A673 (cell line): ENCODE measurements at regions of chr14 and their contacts with region 1.

Region 1: GRCh38 chr14:102437997-102438915 is 71.3 kb downstream of the ANKRD9 start:
- DNase-seq: peak; percentile 95
- H3K4me3 ChIP-seq: peak overlapping the region; percentile 41
- H3K27ac ChIP-seq: peak overlapping the region; percentile 29
- H3K4me1 ChIP-seq: peaks cover 5% of the 10 kb centered on the region
- H3K27me3 ChIP-seq: no peaks in the 10 kb centered on the region
- CTCF ChIP-seq: peak; percentile 88

Region 2: DNA sequence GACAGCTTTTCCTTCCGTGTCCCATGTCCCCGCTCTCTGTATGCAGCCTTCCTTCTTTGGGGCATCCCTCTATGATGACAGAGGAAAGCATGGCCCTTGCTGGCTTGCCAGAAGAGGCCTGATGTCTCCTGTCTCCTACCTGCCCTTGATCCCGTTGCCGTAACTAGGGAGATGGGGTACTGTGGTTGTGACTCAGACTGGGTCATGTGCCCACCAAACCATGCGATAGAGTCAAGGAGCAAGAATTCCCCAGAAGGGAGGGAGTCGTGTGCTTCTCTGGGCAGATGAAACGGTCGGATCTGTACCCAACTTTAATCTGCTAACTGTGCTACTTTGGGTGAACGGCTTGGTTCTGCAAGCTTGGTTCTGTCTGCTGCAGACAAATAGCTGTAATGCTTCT is 573.0 kb before region 1 on chr14:
- CTCF ChIA-PET with region 1: no interaction called
- POLR2A ChIA-PET with region 1: no interaction called
- intact Hi-C with region 1: no loop called
- DNase-seq: no peak
- H3K4me3 ChIP-seq: no peak overlapping the region
- H3K27ac ChIP-seq: no peak overlapping the region
- H3K4me1 ChIP-seq: no peaks in the 10 kb centered on the region
- H3K27me3 ChIP-seq: no peaks in the 10 kb centered on the region
- CTCF ChIP-seq: no peak

Region 3: DNA sequence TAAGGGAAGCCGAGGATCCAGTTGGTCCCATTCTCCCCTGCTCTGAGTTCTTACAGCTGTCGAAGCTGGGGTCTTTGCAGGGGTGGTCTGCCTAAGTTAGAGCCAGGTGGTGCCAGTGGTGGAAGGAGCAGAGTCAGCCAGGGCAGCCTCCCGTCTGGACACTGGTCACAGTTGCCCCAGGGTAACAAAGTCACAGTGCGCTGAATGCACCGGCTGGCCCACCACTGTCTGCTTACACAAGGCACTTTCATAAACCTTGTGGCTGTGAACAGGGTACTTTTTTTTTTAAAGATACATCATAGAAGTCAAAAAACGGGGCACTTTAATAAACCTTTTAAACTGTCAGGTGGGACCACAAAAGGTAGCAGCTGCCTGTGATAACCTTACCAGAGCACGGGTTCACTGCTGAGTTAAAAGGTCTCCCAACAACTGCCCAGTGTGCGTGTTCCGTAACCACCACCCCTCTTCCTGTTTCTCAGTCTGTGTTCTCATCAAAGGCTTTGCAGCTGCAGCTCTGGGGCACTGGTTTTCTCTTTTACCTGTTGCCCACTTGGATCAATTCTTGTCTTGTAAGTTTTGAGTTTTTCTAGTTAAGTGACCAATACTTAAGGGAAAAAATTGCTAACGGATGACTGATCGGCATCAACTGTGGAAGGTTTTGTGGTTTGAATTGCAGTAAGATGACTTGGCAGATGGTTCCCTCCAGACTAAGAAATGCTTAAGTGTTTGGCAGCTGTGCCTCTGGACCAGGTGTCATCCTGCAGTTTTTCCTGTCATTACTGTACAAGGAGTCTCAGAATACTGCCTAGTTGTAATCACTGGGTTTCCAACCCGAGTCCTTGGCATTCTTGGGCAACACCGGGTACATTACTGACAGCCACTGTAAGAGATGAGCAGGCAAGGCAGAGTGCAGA is 417.9 kb before region 1 on chr14:
- CTCF ChIA-PET with region 1: no interaction called
- POLR2A ChIA-PET with region 1: no interaction called
- intact Hi-C with region 1: no loop called
- DNase-seq: no peak
- H3K4me3 ChIP-seq: no peak overlapping the region
- H3K27ac ChIP-seq: no peak overlapping the region
- H3K4me1 ChIP-seq: no peaks in the 10 kb centered on the region
- H3K27me3 ChIP-seq: no peaks in the 10 kb centered on the region
- CTCF ChIP-seq: no peak

Region 4: DNA sequence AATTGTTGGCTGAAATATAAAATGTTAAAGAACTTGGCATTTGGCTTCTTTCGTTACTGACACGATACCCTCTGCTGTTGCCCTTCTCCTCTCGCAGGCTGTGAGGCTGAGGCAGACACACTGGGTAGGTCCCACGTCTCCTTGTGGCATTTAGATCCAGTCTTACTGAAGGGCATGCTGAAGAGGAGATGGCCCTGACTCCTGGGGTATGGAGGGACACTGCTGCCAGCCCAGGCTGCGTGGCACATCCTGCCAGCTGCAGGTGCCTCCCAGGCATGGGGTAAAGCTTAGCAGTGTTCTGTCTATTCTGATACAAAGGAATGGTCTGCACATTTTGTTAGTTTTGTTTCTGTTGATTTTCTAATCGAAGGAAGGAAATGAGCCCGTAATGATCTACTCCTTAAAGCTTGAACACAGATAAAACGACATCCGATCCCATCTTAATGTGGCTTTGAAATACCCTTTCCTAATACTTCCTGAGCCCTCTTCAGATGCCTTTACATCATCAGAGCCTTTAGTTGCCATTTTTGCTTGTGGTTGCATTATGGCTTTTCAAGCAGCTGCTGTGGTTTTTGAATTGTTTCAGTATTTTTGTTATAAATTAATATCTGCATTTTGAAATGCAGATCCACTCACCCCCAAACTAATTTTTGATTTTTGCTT is 237.4 kb before region 1 on chr14:
- CTCF ChIA-PET with region 1: no interaction called
- POLR2A ChIA-PET with region 1: no interaction called
- intact Hi-C with region 1: no loop called
- DNase-seq: peak; percentile 45
- H3K4me3 ChIP-seq: no peak overlapping the region
- H3K27ac ChIP-seq: peak overlapping the region; percentile 70
- H3K4me1 ChIP-seq: peaks cover 11% of the 10 kb centered on the region
- H3K27me3 ChIP-seq: no peaks in the 10 kb centered on the region
- CTCF ChIP-seq: no peak

Region 5: DNA sequence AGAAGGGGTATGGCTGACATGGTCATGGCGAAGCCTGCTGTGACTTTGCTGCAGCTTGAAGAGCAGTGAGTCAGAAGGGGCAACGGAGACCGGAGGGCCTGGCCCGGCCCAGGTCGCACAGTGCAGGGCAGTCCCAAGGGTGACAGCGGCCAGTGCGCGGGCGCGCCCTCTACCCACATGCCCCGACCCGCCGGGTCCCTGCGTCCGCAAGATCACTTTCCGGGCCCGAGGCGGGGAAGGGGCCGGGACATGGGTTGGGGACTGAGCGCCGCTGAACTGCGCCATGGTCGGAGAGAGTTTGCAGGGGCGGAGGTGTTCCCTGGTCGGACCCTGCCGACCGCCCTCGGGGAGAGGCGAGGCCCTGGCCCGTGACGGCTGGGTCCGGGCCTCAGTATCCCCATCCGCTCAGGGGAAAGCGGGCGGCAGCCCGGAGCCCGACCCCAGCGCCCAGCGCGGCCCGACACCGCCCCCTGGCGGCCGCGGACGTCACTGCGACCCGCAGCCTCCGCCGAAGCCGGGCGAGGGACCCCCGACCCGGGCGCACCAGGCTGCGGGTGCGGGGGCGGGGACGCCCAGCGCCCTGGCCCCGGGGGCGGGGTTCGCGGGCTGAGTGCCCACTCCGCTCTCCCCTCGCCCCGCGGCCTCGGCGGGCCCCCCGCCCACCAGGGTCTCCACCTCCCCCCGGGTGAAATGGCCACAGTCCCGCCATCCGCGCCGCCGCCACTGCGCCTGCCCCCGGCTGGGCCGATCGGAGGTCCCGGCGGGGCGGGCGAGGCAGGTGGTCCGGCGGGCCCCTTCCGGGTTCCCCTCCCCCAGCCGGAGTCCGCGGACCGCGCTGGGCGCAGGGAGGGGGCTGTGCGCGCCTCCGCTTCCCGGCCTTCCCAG is 78.5 kb after region 1 on chr14:
- CTCF ChIA-PET with region 1: interaction called, 6 read pairs
- POLR2A ChIA-PET with region 1: no interaction called
- intact Hi-C with region 1: loop called (anchors 1 kb)
- DNase-seq: peak; percentile 47
- H3K4me3 ChIP-seq: peak overlapping the region; percentile 67
- H3K27ac ChIP-seq: peak overlapping the region; percentile 80
- H3K4me1 ChIP-seq: peaks cover 5% of the 10 kb centered on the region
- H3K27me3 ChIP-seq: no peaks in the 10 kb centered on the region
- CTCF ChIP-seq: peak; percentile 56

Region 6: DNA sequence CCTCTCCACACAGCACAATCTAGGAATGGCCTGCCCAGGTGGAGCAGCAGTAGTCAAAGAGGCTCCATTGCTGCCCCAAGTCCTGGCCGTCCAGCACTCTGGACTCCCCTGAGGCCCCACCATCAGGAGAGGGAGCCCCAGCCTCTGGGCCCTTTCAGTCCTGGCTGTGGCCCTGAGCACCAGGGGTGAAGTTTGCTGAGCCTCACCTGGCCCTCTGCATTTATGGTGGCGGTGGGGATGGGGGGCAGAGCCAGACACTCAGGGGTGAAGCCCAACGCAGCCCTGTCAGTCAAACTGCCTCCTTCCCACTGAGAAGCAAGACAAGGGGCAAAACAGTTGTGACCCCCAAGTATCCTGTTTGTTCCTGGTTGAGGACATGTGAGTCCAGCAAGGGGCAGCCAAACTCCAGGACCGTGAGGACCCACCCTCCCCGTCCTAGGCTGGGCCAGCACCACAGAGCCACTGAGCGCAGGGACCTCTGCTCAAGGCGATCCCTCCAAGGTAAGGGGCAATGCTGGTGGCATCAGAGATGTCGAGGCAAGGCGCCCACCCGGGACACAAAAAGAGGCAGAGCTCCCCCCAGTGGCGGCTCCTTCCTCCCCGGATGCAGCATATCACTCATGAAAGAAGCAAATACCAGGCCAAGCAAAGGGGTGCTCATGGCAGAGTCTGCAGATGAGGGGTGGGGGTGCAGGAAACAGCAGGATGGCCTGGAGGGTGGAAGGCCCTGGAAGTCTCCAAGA is 479.4 kb after region 1 on chr14:
- CTCF ChIA-PET with region 1: no interaction called
- POLR2A ChIA-PET with region 1: no interaction called
- intact Hi-C with region 1: loop called (anchors 2 kb)
- DNase-seq: peak; percentile 78
- H3K4me3 ChIP-seq: no peak overlapping the region
- H3K27ac ChIP-seq: no peak overlapping the region
- H3K4me1 ChIP-seq: no peaks in the 10 kb centered on the region
- H3K27me3 ChIP-seq: peaks cover 2% of the 10 kb centered on the region
- CTCF ChIP-seq: peak; percentile 88